Activated CD8-positive, alpha-beta T cell treated with anti-CD3 and anti-CD28 coated beads, Interleukin-2, amount 10 ng/mL, durations not matched to agents 7 days and 5 days (primary cell): ENCODE measurements at regions of chr3 and their contacts with region 1.

Region 1: GRCh38 chr3:25844891-25845290 is 55.0 kb downstream of the OXSM start:
- DNase-seq: no peak
- ATAC-seq: no peak
- H3K4me3 Mint-ChIP-seq: no peak overlapping the region
- H3K27ac Mint-ChIP-seq: no peak overlapping the region
- H3K4me1 Mint-ChIP-seq: no peaks in the 10 kb centered on the region
- H3K27me3 Mint-ChIP-seq: peaks cover 6% of the 10 kb centered on the region

Region 2: DNA sequence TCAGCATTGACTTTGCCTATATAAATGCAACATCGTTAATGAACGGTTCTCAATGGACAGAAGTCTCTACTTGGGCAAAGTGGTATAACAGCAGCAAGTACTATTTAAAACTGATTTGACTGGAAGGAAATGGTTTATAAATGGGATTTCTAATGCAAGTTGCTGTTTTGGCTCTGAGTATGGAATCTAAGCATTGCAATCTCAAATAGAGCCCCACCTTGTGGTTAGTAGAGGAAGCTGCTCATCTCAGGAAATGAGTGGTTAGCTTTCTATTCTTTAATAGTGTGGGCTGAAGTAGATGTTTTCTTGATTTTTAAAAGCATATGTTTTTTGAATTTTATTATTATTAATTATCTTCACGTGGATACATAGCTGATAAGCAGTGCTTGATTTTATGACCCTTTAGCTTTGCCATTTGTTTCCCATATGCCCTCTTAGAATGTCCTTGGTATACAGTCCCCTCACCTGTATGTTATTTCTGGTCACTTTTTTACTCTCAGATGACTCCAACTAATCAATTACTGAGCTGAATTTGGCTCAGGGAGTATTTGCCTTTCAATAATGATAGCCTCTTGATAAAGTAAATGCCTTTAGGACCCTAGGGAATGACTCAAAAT is 12.1 kb after region 1 on chr3:
- CTCF ChIA-PET with region 1: interaction called, 26 read pairs
- POLR2A ChIA-PET with region 1: no interaction called
- DNase-seq: peak; percentile 28
- ATAC-seq: peak; percentile 73
- H3K4me3 Mint-ChIP-seq: no peak overlapping the region
- H3K27ac Mint-ChIP-seq: no peak overlapping the region
- H3K4me1 Mint-ChIP-seq: peaks cover 5% of the 10 kb centered on the region
- H3K27me3 Mint-ChIP-seq: no peaks in the 10 kb centered on the region